ENCODE measurements at regions of chr11 and their contacts with region 1.

Region 1: DNA sequence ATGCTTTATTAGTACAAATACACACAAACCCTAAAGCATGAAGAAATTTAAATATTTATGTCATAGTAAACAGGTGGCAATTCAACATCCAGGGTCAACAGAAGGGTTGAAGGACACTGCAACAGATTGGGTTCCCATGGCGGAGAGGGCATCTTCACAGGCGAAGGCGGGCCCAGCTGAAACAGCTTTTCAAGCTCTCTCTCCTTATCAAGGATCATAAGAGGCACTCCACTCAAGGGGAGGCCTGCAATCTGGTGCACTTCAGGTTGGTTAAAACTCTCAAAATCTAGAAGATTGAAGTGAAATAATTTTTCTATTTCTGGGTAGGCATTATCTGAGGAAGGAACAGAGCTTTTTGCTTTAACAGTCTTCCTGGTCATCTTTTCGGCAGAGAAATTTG is 16.8 kb upstream of the SLC22A8 start:
- DNase-seq: no peak
- ATAC-seq: no peak
- H3K4me3 ChIP-seq: no peak overlapping the region
- H3K27ac ChIP-seq: no peak overlapping the region
- H3K4me1 ChIP-seq: no peaks in the 10 kb centered on the region
- H3K27me3 ChIP-seq: no peaks in the 10 kb centered on the region
- CTCF ChIP-seq: no peak
- EP300 ChIP-seq: no peak
- POLR2A ChIP-seq: no peak
- RAD21 ChIP-seq: no peak

Region 2: GRCh38 chr11:62999649-63000048 is 32.8 kb before region 1 on chr11:
- CTCF ChIA-PET with region 1: no interaction called
- POLR2A ChIA-PET with region 1: no interaction called
- RAD21 ChIA-PET with region 1: no interaction called
- SMC1A ChIA-PET with region 1: no interaction called
- in situ Hi-C with region 1: no loop called
- intact Hi-C with region 1: no loop called
- DNase-seq: no peak
- ATAC-seq: no peak
- H3K4me3 ChIP-seq: no peak overlapping the region
- H3K27ac ChIP-seq: no peak overlapping the region
- H3K4me1 ChIP-seq: no peaks in the 10 kb centered on the region
- H3K27me3 ChIP-seq: peaks cover 0 to 3% of the 10 kb centered on the region in 2 experiments; a peak in 1 of 4 replicates
- CTCF ChIP-seq: no peak
- EP300 ChIP-seq: no peak
- POLR2A ChIP-seq: no peak
- RAD21 ChIP-seq: no peak

Region 3: DNA sequence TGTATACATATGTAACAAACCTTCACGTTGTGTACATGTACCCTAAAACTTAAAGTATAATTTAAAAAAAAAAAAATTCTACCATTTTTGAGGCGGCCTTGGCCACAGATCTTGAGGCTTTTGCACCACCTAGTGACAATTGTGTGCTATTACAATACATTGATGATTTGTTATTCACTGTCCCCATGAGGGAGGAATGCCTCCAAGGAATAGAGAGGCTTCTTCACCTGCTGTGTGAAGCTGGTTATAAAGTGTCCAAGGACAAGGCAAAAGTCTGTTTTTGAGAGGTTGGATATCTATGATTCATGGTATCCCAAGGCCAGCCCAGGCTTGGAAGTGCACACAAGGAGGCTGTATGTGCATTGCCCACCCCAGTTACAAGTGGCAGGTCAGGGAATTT is 180.3 kb after region 1 on chr11:
- CTCF ChIA-PET with region 1: interaction called, 12 read pairs
- POLR2A ChIA-PET with region 1: no interaction called
- RAD21 ChIA-PET with region 1: interaction called, 3 read pairs
- SMC1A ChIA-PET with region 1: interaction called, 9 read pairs
- in situ Hi-C with region 1: loop called (anchors 5 kb)
- intact Hi-C with region 1: loop called (anchors 1 kb)
- DNase-seq: no peak
- ATAC-seq: no peak; the same call in 2 of the 3 replicates
- H3K4me3 ChIP-seq: no peak overlapping the region
- H3K27ac ChIP-seq: no peak overlapping the region
- H3K4me1 ChIP-seq: no peaks in the 10 kb centered on the region
- H3K27me3 ChIP-seq: no peaks in the 10 kb centered on the region
- CTCF ChIP-seq: peak; percentile 42 to 51 (median 43); a peak in 4 of 6 replicates
- EP300 ChIP-seq: no peak
- POLR2A ChIP-seq: no peak
- RAD21 ChIP-seq: peak; percentile 51

Measured in GM12878 (cell line).